Right ventricle myocardium inferior (tissue), 1 donor: ENCODE measurements at regions of chr13 and their contacts with region 1.

Region 1: GRCh38 chr13:101695870-101696516 is 243.5 kb downstream of the ITGBL1 start:
- DNase-seq: peak; percentile 53
- ATAC-seq: peak; percentile 78

Region 2: DNA sequence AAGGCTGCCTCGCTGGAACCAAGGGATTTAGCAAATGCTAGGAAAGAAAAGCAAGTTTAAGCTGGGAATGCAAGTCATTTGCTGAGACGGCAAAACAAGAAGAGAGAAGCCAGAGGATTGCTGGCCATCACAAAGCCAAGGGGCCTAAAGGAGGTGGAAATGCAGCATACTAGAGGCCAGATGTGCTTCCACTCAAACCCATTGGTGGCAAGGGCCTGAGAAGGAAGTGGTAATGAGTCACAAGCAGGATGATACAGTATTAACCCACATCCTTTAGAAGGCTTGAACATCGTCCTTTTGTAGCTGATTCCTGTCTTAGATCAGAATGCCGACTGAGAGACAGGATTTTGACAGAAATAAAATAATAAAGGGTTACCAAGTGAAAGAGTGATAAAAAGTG is 175.3 kb before region 1 on chr13:
- intact Hi-C with region 1: loop called (anchors 10 kb)
- DNase-seq: no peak
- ATAC-seq: no peak